G401 (cell line): ENCODE measurements at regions of chr14 and their contacts with region 1.

Region 1: DNA sequence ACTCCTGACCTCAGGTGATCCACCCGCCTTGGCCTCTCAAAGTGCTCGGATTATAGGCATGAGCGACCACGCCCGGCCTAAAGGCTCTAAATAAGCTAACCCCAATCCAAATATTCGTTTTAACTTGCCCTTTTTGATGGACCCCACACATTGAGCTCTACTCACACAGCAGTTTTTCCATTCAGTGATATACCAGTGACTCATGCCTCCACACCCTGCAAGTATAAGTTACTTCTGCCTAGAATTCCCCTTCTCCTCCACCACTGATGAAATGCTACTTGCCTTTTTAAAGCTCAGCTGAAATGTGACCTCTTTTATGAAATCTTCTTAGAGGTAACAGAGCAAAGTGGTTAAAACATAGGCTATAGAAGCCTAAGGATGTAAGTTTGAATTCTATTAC is 68.8 kb downstream of the EXOC5 start:
- DNase-seq: no peak

Region 2: GRCh38 chr14:57122129-57122528 is 77.8 kb before region 1 on chr14:
- in situ Hi-C with region 1: no loop called
- DNase-seq: no peak

Region 3: DNA sequence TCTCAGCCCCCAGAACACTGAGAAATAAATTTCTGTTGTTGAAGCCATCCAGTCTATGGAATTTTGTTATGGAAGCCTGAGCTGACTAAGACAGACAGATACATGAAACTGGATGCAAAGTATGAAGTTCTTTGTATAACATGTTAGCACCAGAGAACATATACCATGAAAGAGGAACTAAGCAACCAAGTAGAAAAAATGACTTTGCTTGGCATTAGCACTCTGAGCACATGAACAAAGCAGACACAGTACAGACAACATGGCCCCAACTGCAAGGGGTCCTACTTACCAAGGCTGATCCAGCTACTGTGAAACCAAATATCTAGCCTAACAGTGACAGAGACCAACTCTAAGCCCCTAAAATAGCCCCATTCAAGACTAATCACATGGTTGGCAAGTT is 55.0 kb after region 1 on chr14:
- in situ Hi-C with region 1: loop called (anchors 10 kb)
- DNase-seq: no peak

Region 4: DNA sequence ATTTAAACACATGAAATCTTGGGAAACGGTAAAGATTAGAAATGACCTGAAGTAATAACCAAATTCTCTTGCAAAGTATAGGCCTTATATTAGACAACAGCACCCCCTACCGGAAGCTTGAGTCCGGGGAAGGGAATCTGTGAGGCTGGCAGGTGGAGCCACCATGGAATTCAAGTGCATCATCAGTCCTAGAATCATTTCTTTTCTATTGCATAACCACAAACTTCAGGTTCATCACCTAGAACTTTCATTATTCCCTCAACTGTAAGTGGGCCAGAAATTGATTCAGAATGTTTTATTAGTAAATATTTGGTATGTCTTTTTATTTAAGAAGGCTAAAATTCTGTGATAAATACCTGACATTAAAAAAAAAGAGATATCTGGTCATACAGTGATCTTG is 117.4 kb after region 1 on chr14:
- in situ Hi-C with region 1: loop called (anchors 10 kb)
- DNase-seq: peak; percentile 87